ENCODE measurements at regions of chr7 and their contacts with region 1.

Region 1: DNA sequence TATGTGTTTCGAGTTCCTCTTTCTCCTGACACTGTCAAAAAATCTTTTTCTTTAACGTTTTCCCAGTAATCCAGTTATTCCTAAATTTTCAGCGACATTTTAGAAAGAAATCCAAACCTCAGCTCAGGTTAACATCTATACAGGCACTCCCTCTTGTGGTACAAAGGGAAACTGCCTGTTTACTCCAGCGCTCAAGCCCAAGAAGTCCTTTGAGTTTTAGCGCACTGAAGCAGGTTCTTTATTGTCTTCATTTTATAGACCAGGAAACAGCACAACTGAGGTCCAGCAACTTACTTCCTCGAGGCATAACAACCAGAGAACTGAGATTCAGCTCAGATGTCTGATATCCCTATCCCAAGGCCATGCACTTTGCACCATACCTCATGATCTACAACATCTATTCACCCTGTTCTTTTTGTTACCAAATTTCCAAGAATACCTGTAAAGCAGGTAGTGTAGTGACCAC is 287.2 kb upstream of the MKLN1 start:
- DNase-seq: peak in 3 of 5 donors; percentile 39 to 61 (median 53)
- H3K4me3 ChIP-seq: no peak overlapping the region
- H3K4me3 Mint-ChIP-seq: peak overlapping the region in 5 of 7 donors; percentile 1 to 64 (median 34)
- H3K27ac ChIP-seq: no peak overlapping the region
- H3K27ac Mint-ChIP-seq: peak overlapping the region; percentile 27 to 86 (median 62)
- H3K4me1 ChIP-seq: peaks cover 29% of the 10 kb centered on the region
- H3K4me1 Mint-ChIP-seq: peaks cover 64 to 78% (median 75%) of the 10 kb centered on the region in 3 donors
- H3K27me3 ChIP-seq: no peaks in the 10 kb centered on the region
- H3K27me3 Mint-ChIP-seq: no peaks in the 10 kb centered on the region

Region 2: GRCh38 chr7:130904031-130904757 is 136.3 kb before region 1 on chr7:
- CTCF ChIA-PET with region 1: interaction called, 10 read pairs
- POLR2A ChIA-PET with region 1: no interaction called
- DNase-seq: no peak
- H3K4me3 ChIP-seq: no peak overlapping the region
- H3K4me3 Mint-ChIP-seq: peak overlapping the region in 4 of 7 donors; percentile 17 to 59 (median 58)
- H3K27ac ChIP-seq: peak overlapping the region; percentile 12
- H3K27ac Mint-ChIP-seq: peak overlapping the region; percentile 51 to 93 (median 82)
- H3K4me1 ChIP-seq: peaks cover 18% of the 10 kb centered on the region
- H3K4me1 Mint-ChIP-seq: peaks cover 58 to 92% (median 86%) of the 10 kb centered on the region in 3 donors
- H3K27me3 ChIP-seq: no peaks in the 10 kb centered on the region
- H3K27me3 Mint-ChIP-seq: peaks cover 0 to 4% of the 10 kb centered on the region in 2 donors

Region 3: DNA sequence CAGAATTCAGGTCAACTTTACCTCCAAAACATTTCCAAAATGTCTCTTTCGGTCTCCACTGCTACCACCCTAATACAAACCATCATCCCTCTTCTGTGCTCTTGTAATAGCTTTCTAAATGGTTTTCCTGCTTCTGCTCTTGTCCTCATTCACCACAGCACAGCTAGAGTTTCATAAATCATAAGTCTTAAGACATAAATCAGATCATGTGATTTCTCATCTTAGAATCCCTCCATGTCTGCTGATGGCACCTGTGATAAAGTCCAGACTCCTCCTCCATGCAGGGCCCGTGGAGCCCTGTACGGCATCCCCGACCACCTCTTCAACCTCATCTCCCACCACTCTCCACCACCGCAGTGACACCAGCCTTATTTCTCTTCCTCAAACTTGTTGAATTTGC is 74.8 kb after region 1 on chr7:
- CTCF ChIA-PET with region 1: no interaction called
- POLR2A ChIA-PET with region 1: no interaction called
- DNase-seq: no peak
- H3K4me3 ChIP-seq: no peak overlapping the region
- H3K4me3 Mint-ChIP-seq: no peak overlapping the region
- H3K27ac ChIP-seq: no peak overlapping the region
- H3K27ac Mint-ChIP-seq: peak overlapping the region in 4 of 8 donors; percentile 0 to 68 (median 30)
- H3K4me1 ChIP-seq: peaks cover 12% of the 10 kb centered on the region
- H3K4me1 Mint-ChIP-seq: peaks cover 14 to 22% (median 17%) of the 10 kb centered on the region in 3 donors
- H3K27me3 ChIP-seq: no peaks in the 10 kb centered on the region
- H3K27me3 Mint-ChIP-seq: peaks cover 0 to 2% of the 10 kb centered on the region in 2 donors

Region 4: GRCh38 chr7:131164025-131164899 is 123.8 kb after region 1 on chr7:
- CTCF ChIA-PET with region 1: no interaction called
- POLR2A ChIA-PET with region 1: no interaction called
- DNase-seq: no peak
- H3K4me3 ChIP-seq: no peak overlapping the region
- H3K4me3 Mint-ChIP-seq: no peak overlapping the region
- H3K27ac ChIP-seq: no peak overlapping the region
- H3K27ac Mint-ChIP-seq: no peak overlapping the region
- H3K4me1 ChIP-seq: no peaks in the 10 kb centered on the region
- H3K4me1 Mint-ChIP-seq: no peaks in the 10 kb centered on the region
- H3K27me3 ChIP-seq: no peaks in the 10 kb centered on the region
- H3K27me3 Mint-ChIP-seq: peaks cover 3 to 4% of the 10 kb centered on the region in 2 donors

Measured in CD8-positive, alpha-beta memory T cell (primary cell).